Sciatic nerve (tissue), 2 donors: ENCODE measurements at regions of chr20 and their contacts with region 1.

Region 1: DNA sequence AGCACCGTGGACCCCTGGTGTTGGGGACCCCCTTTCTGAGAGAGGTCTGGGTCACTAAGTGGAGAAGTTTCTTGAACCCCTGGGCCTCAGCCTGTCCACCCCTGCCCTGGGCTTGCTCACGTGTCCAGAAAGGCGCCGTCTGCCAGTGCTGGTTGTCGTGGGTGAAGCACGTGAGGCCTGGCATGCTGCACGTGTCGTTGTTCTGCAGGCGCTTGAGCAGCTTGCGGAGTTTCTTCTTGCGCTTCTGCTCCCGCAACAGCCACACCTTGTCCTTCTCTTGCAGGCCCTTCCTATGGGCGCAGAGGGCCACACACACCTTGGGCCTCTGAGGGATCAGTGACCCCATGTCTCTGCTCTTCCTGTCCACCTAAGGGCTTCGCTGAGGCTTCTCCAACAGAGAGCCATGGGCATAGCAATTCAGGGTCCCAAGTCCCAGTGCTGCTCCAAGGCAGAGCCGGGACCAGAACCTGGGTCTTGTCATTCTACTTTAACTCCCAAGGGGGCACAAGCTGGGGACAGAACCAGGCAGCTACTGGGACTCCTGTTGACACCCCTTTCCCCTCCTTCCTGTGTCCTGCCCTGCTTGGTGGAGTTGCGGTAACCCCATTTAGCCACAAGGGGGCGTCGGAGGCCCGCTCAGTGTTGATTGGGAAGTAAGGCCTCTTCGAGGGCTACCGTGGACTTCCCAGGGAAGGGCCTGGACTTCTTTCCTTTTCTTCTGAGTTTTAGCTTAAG is 121.8 kb downstream of the SULF2 start:
- DNase-seq: peak; percentile 89
- ATAC-seq: peak; percentile 90

Region 2: GRCh38 chr20:48620519-48621254 is 957.2 kb after region 1 on chr20:
- intact Hi-C with region 1: loop called (anchors 5 kb)
- DNase-seq: peak; percentile 94
- ATAC-seq: peak; percentile 96